GM18951 (cell line): ENCODE measurements at regions of chr4 and their contacts with region 1.

Region 1: DNA sequence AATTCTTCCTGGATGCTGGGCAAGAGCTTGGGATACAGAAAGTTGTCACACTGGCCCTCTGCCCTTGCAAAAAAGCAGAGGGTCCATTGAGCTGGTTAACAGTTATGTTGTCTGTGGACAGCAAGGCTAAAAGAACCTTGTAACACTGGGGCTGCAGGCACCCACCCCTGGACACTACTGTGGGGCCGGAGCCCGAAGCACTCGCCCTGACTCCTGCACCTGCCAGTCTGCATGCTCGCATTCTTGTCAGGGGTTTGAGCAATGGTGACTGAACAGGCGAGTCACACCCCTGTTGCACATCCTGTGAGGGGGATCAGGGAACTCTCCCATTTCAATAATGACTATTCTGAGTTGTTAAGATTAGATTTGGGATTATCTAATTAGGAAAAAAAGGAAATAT is 23.6 kb downstream of the ADH4 start:
- POLR2A ChIP-seq: no peak

Region 2: GRCh38 chr4:98510757-98511517 is 609.6 kb before region 1 on chr4:
- in situ Hi-C with region 1: no loop called
- POLR2A ChIP-seq: no peak

Region 3: GRCh38 chr4:99405433-99406115 is 285.1 kb after region 1 on chr4:
- in situ Hi-C with region 1: loop called (anchors 10 kb)
- POLR2A ChIP-seq: no peak

Region 4: DNA sequence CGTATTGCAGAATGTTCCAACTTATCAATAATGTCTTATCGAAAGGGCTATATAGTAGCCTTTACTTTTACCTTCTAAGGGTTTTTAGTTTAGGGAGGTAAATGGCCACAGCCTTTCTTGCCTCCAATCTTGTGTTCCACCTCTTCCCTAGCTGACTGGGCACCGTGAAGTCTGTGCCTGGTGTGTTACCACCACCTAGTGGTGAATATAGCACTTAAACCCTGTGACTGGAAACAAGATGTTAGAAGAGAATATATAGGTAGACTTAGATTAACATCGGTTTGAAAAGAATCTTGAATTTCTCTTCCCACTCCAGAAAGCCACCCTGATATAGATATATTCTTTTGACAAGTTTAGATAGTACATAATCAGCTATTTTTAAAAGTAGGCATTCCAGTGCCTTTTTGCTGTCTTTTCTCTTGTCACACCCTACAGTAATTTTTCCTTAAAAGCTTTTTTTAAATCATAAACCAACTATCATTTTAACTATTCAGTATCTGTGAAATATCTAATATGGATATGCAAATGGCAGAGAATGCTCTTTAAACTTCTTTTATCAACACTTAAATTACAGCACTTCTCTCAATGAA is 342.5 kb after region 1 on chr4:
- in situ Hi-C with region 1: loop called (anchors 10 kb)
- POLR2A ChIP-seq: no peak

Region 5: DNA sequence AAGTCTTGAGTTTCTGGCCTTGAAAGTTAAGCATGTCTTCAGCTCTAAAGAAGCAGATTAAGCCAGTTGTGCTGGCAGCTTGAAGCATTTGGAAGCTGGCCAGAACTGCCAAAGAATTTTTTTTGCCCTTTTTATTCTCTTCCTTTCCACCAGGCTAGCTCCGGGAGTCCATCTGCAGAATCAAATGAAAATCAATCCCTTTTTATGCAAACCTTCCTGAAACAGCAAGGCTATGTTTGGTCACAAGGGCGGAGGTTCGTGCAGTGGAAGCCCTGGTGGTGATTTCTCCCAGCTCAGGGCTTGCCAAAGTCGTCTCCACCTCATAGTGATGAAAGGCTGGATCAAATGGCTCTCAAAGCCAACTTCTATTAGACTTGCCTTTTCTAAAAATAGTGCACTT is 558.7 kb after region 1 on chr4:
- in situ Hi-C with region 1: no loop called
- POLR2A ChIP-seq: no peak